ENCODE measurements at regions of chr18 and their contacts with region 1.

Region 1: DNA sequence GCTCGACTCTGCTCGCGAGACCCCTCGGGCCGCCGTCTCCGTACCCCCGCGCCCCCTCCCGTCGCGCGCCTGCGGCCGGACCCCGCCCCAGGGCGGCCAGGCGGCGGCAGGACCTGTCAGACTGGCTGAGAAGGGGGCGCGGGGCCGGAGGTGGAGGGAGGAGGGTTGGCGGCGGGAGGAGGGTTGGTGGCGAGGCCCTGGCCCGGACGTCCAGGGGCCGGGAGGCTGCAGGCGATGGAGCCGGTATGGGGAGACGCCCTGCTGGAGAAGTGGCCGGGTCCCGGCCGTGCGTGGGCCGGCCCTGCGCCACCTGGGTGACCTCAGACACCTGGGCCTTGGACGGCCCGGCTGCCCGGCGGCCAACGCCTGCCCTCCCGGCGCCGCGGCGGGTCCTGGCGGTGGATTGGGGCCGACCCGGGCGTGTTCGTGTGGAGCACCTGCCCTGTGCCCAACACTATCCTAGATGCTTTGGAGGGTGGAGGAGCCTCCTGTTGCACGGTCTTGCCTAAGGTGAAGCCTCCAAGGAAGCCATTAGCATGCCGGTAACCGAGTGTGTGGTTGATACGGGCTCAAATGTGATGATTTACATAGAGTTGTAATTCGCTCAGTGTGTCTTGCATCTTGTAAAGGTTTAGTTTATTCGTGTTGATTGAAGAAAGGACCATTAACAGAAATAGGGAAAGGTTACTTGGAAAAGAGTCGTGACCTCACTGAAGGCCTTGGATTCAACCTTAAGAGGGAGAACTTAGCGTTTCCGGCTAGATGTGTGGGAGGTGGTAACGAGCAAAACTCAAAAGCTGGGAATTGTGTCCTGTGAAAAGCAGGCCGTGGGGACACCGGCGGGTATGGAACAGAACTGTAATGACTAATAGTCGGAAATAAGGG is 556 bp downstream of the MYL12B start:
- DNase-seq: peak; percentile 65
- ATAC-seq: peak; percentile 36
- H3K4me3 Mint-ChIP-seq: peak overlapping the region; percentile 94
- H3K27ac Mint-ChIP-seq: peak overlapping the region; percentile 100
- H3K4me1 Mint-ChIP-seq: peaks cover 65% of the 10 kb centered on the region
- H3K27me3 Mint-ChIP-seq: no peaks in the 10 kb centered on the region

Region 2: GRCh38 chr18:3245853-3246634 is 16.4 kb before region 1 on chr18:
- CTCF ChIA-PET with region 1: interaction called, 14 read pairs
- DNase-seq: peak; percentile 90
- ATAC-seq: peak; percentile 56
- H3K4me3 Mint-ChIP-seq: peak overlapping the region; percentile 92
- H3K27ac Mint-ChIP-seq: peak overlapping the region; percentile 99
- H3K4me1 Mint-ChIP-seq: peaks cover 24% of the 10 kb centered on the region
- H3K27me3 Mint-ChIP-seq: peaks cover 4% of the 10 kb centered on the region